B cell (primary cell): ENCODE measurements at regions of chr9 and their contacts with region 1.

Region 1: DNA sequence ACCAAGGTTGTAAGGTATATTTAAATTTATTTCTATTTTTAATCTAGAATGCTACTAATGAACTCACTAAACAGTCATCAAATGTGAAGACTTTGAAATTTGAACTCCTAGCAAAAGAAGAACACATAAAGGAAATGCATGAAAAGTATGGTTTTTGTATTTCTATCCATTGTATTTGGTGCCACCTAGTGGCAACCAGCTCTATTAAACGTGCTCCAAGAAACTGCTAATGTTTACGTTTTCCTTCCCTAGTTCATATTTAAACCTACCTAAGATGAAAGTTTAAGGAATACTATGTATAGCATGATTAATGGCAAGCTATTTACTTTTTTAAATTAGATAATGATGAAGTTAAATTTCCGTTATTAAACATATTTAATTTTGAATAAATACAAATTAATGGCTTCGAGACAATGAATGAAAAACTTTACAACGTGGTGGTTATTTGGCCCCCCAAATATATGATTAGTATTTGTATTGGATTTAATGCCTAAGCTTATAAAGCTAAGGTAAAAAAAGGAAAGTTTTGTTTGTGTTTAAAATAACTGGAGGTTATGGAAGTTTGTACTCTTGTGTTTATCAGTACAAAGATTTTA is 115.9 kb upstream of the SH3GL2 start:
- DNase-seq: peak; percentile 40
- ATAC-seq: no peak
- H3K4me3 ChIP-seq: no peak overlapping the region
- H3K4me3 Mint-ChIP-seq: no peak overlapping the region
- H3K27ac ChIP-seq: no peak overlapping the region
- H3K27ac Mint-ChIP-seq: no peak overlapping the region
- H3K4me1 ChIP-seq: no peaks in the 10 kb centered on the region
- H3K4me1 Mint-ChIP-seq: no peaks in the 10 kb centered on the region
- H3K27me3 ChIP-seq: no peaks in the 10 kb centered on the region
- H3K27me3 Mint-ChIP-seq: no peaks in the 10 kb centered on the region
- CTCF ChIP-seq: peak; percentile 95

Region 2: GRCh38 chr9:17063535-17064135 is 399.3 kb before region 1 on chr9:
- CTCF ChIA-PET with region 1: interaction called, 3 read pairs
- POLR2A ChIA-PET with region 1: no interaction called
- intact Hi-C with region 1: loop called (anchors 5 kb)
- DNase-seq: peak; percentile 14
- ATAC-seq: no peak
- H3K4me3 ChIP-seq: no peak overlapping the region
- H3K4me3 Mint-ChIP-seq: no peak overlapping the region
- H3K27ac ChIP-seq: no peak overlapping the region
- H3K27ac Mint-ChIP-seq: no peak overlapping the region
- H3K4me1 ChIP-seq: no peaks in the 10 kb centered on the region
- H3K4me1 Mint-ChIP-seq: no peaks in the 10 kb centered on the region
- H3K27me3 ChIP-seq: no peaks in the 10 kb centered on the region
- H3K27me3 Mint-ChIP-seq: no peaks in the 10 kb centered on the region
- CTCF ChIP-seq: peak; percentile 49

Region 3: DNA sequence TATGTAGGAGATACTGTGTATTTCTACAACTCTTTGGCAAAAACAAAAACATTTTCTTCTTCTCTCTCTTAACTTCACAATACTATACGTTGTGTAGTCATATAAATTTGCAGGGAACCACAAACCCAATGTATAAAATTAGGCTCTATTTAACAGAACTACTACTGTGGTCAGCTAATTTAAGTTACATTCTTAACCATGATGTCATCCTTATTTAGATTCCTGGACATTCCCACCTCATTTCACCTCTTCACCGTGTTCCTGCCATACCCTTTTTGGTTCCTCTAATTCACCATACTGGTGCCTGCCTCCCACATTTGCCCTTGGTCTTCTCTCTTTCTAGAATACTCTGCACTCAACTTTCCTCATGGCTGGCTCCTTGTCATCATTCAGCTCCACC is 40.2 kb after region 1 on chr9:
- CTCF ChIA-PET with region 1: no interaction called
- POLR2A ChIA-PET with region 1: no interaction called
- intact Hi-C with region 1: no loop called
- DNase-seq: no peak
- ATAC-seq: no peak
- H3K4me3 ChIP-seq: no peak overlapping the region
- H3K4me3 Mint-ChIP-seq: no peak overlapping the region
- H3K27ac ChIP-seq: no peak overlapping the region
- H3K27ac Mint-ChIP-seq: no peak overlapping the region
- H3K4me1 ChIP-seq: no peaks in the 10 kb centered on the region
- H3K4me1 Mint-ChIP-seq: no peaks in the 10 kb centered on the region
- H3K27me3 ChIP-seq: no peaks in the 10 kb centered on the region
- H3K27me3 Mint-ChIP-seq: no peaks in the 10 kb centered on the region
- CTCF ChIP-seq: no peak